PC-3 (cell line): ENCODE measurements at regions of chr22 and their contacts with region 1.

Region 1: GRCh38 chr22:32411829-32412592 is at the start of gene RTCB:
- DNase-seq: peak; percentile 89
- ATAC-seq: peak; percentile 74
- H3K4me3 ChIP-seq: peak within 1 kb of the TSS; percentile 90
- H3K27ac ChIP-seq: peak within 1 kb of the TSS; percentile 78
- H3K4me1 ChIP-seq: peaks cover 16% of the 10 kb centered on the region
- H3K27me3 ChIP-seq: peaks cover 8% of the 10 kb centered on the region; the same call in 1 of the 2 replicates
- CTCF ChIP-seq: no peak
- total RNA-seq, gene RTCB: 136 and 146 TPM in 2 replicates

Region 2: GRCh38 chr22:32444068-32444467 is 32.1 kb after region 1 on chr22:
- CTCF ChIA-PET with region 1: interaction called, 3 read pairs
- POLR2A ChIA-PET with region 1: no interaction called
- intact Hi-C with region 1: loop called (anchors 1 kb)
- DNase-seq: peak; percentile 52
- ATAC-seq: peak; percentile 82
- H3K4me3 ChIP-seq: no peak overlapping the region
- H3K27ac ChIP-seq: no peak overlapping the region
- H3K4me1 ChIP-seq: no peaks in the 10 kb centered on the region
- H3K27me3 ChIP-seq: peaks cover 23% of the 10 kb centered on the region; the same call in 1 of the 2 replicates
- CTCF ChIP-seq: peak; percentile 68

Region 3: DNA sequence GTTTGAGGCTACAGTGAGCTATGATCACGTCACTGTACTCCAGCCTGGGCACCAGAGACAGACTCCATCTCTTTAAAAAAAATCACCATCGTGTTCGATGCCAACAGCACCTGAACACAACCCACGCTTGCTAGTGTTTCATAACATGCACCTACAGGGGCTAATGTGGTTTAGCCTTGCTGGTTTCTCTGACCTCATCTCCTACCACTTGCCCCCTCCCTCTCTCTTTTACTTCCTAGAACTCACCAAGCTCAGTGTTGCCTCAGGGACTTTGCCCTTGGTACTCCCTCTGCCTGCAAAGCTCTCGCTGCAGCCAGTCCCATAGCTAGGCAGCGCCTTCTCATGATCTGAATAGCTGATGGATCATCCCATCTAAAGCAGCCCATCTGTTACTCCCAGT is 162.4 kb after region 1 on chr22:
- CTCF ChIA-PET with region 1: no interaction called
- POLR2A ChIA-PET with region 1: no interaction called
- intact Hi-C with region 1: no loop called
- DNase-seq: no peak
- ATAC-seq: no peak
- H3K4me3 ChIP-seq: no peak overlapping the region
- H3K27ac ChIP-seq: no peak overlapping the region
- H3K4me1 ChIP-seq: no peaks in the 10 kb centered on the region
- H3K27me3 ChIP-seq: peaks cover 3% of the 10 kb centered on the region; the same call in 1 of the 2 replicates
- CTCF ChIP-seq: no peak